HepG2 (cell line): ENCODE measurements at regions of chr19 and their contacts with region 1.

Region 1: GRCh38 chr19:39554701-39555311 is 14.8 kb upstream of the EID2 start:
- DNase-seq: no peak
- ATAC-seq: no peak
- H3K4me3 ChIP-seq: no peak overlapping the region
- H3K27ac ChIP-seq: no peak overlapping the region
- H3K4me1 ChIP-seq: peaks cover 26% of the 10 kb centered on the region
- H3K27me3 ChIP-seq: no peaks in the 10 kb centered on the region; a peak in 1 of 5 replicates
- CTCF ChIP-seq: no peak
- EP300 ChIP-seq: no peak
- POLR2A ChIP-seq: no peak
- RAD21 ChIP-seq: no peak

Region 2: GRCh38 chr19:39445265-39446111 is 109.3 kb before region 1 on chr19 and contains the start of gene SUPT5H:
- CTCF ChIA-PET with region 1: no interaction called
- POLR2A ChIA-PET with region 1: no interaction called
- in situ Hi-C with region 1: no loop called
- intact Hi-C with region 1: no loop called
- DNase-seq: peak; percentile 95
- ATAC-seq: peak; percentile 96
- H3K4me3 ChIP-seq: peak within 1 kb of the TSS; percentile 81 to 98 (median 94)
- H3K27ac ChIP-seq: peak within 1 kb of the TSS; percentile 91
- H3K4me1 ChIP-seq: peaks cover 47% of the 10 kb centered on the region
- H3K27me3 ChIP-seq: peaks cover 0 to 3% of the 10 kb centered on the region in 2 experiments; a peak in 2 of 5 replicates
- CTCF ChIP-seq: no peak
- EP300 ChIP-seq: no peak
- POLR2A ChIP-seq: peak; percentile 77 to 92
- RAD21 ChIP-seq: 0 out of 2 replicates have a peak, but pooled peaks have one; percentile 5
- total RNA-seq, gene SUPT5H: 34.9 and 48.2 TPM in 2 replicates

Region 3: DNA sequence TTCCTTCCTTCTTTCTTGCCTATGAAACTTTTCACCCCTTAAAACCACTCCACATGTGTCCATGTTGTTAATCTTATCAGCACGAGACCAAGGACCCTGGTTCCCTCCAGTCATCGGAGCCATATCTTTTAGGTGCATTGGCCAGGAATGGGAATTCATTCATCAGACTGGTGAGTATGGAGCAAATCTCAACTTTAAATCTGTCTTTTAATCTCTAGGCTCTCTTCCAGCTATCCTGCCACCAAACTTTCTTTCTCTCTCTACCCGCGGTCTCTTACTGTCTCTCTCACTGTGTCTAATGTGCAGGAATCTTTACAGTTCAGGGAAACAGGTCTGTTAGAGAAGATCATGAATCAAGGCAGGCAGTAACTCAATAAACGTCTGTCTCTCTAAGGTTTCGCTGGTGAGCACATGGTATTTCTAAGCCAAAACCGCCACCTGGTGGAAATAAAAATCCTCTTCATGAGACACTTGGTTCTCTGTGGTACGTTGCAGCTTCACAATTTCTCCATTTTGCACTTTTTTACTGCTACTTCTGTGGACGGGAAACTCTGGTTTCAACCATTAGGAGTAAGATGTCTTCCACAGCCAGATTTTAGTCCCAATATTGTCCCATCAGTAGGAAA is 117.0 kb after region 1 on chr19:
- CTCF ChIA-PET with region 1: interaction called, 49 read pairs
- POLR2A ChIA-PET with region 1: no interaction called
- in situ Hi-C with region 1: loop called (anchors 5 kb)
- intact Hi-C with region 1: no loop called
- DNase-seq: peak; percentile 60
- ATAC-seq: peak; percentile 75
- H3K4me3 ChIP-seq: no peak overlapping the region
- H3K27ac ChIP-seq: no peak overlapping the region
- H3K4me1 ChIP-seq: no peaks in the 10 kb centered on the region
- H3K27me3 ChIP-seq: peaks cover 0 to 6% of the 10 kb centered on the region in 2 experiments; a peak in 1 of 5 replicates
- CTCF ChIP-seq: peak; percentile 81
- EP300 ChIP-seq: no peak
- POLR2A ChIP-seq: no peak
- RAD21 ChIP-seq: peak; percentile 79